HEK293 (cell line): ENCODE measurements at regions of chr5 and their contacts with region 1.

Region 1: DNA sequence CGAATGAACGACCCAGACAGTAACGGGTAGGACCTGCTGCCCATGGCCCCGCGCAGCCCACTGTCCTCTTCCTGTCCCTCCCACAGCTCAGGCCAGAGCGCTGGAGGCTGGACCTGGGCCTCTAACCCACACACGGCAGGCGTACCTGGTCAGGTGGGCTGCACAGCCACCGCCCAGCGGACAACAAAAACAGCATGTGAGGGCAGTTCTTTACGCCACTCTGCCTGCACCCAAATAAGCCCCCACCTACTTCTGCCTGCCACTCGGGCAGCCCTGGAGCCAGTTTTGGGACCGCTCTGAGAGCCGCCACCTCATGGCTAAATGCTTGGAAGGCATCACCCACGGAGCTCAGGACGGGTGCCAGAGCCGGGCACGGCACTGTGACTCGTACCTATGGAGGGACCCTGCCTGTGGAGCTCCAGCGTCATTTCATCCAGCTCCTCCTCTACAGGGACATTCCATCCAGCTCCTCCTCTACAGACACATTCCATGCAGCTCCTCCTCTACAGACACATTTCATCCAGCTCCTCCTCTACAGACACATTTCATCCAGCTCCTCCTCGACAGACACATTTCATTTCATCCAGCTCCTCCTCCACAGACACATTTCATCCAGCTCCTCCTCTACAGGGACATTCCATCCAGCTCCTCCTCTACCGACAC is 18.9 kb downstream of the CLPTM1L start:
- H3K4me3 ChIP-seq: no peak overlapping the region
- H3K27ac ChIP-seq: no peak overlapping the region
- H3K4me1 ChIP-seq: no peaks in the 10 kb centered on the region
- CTCF ChIP-seq: no peak

Region 2: DNA sequence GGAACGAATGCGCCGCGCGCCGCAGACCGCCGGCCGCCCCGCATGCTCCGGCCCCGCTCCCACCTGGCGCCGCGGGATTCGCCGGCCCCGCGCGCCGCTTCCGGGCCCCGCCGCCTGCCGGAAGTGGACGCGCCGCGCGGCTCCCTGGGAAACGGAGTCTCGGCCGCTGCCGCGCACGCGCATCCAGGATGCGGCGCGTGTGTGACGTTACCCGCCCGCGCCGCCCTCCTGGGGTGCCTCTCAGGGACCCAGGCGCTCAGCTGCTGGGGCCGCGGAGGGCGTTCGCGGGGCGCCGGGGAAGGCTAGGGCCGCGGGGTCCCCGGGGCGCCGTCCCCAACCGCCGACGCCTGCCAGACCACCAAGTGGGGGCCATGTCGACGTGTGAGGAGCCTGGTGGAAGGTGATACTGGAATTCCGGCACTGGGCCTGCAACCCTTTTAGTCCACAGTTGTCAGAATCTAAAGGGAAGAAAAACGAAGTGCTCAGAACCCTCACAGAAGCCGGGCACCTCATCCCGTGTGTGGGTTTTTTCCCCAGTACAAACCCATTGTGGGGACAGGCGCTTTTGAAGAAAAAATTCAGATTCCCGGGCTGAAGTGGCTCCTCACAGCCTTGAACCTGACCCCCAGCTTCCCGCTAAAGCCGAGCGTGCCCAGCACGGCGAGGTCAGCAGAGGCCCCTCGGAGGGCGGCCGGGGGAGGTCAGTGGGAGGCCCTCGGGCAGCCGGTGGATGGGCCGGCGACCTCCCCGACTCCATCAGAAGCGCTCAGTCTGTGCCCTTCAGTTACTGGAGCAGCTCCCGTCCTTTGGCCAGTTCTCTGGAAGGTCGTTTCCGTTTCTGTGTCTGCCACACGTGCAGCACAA is 19.2 kb after region 1 on chr5 and contains the start of gene CLPTM1L:
- CTCF ChIA-PET with region 1: interaction called, 4 read pairs
- POLR2A ChIA-PET with region 1: interaction called, 37 read pairs
- H3K4me3 ChIP-seq: peak within 1 kb of the TSS; percentile 91
- H3K27ac ChIP-seq: peak within 1 kb of the TSS; percentile 64; the same call in 1 of the 2 replicates
- H3K4me1 ChIP-seq: peaks cover 7% of the 10 kb centered on the region; the same call in 1 of the 2 replicates
- CTCF ChIP-seq: no peak

Region 3: DNA sequence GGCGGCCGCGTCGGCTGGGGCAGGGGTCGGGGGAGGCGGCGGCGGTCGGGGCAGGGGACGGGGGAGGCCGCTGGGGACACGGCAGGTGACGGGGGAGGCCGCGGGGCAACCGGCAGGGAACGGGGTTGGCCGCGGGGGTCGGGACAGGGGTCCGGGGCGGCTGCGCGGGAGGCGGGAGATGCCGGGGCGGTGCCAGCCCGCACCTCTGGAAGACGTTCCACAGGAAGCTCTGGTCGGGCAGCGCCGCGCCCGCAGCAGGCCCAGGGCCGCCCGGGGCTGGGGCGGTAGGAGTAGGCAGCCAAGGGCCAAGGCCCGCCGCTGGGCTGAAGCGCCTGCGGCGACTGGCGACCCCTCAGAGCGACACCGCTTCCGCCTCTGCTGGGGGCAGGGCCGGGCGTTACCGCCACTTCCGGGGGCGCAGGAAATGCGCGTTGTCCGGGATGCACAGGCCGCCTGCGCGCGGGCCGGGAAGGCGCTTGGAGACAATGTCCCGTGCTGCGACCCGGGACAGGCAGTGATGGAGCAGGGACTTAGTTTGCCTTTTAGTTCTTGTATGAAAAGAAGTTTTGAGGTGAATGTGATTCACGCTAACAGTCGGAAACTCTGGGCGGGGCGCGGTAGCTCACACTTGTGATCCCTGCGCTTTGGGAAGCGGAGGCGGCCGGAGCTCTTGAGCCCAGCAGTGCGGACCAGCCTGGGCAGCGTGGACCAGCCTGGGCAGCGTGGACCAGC is 307.8 kb after region 1 on chr5:
- CTCF ChIA-PET with region 1: no interaction called
- POLR2A ChIA-PET with region 1: interaction called, 10 read pairs
- H3K4me3 ChIP-seq: peak overlapping the region; percentile 73
- H3K27ac ChIP-seq: peak overlapping the region; percentile 79
- H3K4me1 ChIP-seq: no peaks in the 10 kb centered on the region
- CTCF ChIP-seq: no peak